Activated CD8-positive, alpha-beta T cell treated with anti-CD3 and anti-CD28 coated beads for 36 hours (primary cell): ENCODE measurements at regions of chr7 and their contacts with region 1.

Region 1: DNA sequence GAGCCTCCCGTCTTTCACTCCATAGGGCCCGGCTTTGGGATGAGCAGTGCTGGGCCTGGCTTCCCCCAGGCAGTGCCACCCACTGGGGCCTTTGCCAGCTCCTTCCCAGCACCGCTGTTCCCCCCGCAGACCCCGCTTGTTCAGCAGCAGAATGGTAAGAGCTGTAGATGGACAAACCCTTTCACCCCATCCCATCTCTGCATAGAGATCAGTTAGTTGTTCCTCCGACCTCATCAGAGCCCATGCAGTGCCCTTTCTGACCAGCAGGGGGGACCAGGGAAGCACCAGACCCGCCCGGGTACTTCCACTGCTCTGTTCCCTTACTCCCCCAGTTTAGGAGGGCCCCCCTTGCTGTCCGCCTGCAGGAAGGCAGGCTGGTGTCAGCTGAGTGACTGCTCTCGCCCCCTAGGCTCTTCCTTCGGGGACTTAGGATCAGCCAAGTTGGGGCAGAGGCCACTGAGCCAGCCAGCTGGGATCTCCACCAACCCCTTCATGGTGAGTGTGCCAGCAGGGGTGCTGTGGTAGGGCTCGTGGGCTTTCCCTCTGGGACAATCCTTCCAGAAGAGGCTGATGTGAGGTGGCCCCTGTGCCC is 9.8 kb downstream of the SAP25 start:
- DNase-seq: peak; percentile 92
- ATAC-seq: peak; percentile 76
- H3K4me3 Mint-ChIP-seq: no peak overlapping the region
- H3K27ac Mint-ChIP-seq: no peak overlapping the region
- H3K4me1 Mint-ChIP-seq: peaks cover 26% of the 10 kb centered on the region
- H3K27me3 Mint-ChIP-seq: no peaks in the 10 kb centered on the region
- CTCF ChIP-seq: peak; percentile 95

Region 2: DNA sequence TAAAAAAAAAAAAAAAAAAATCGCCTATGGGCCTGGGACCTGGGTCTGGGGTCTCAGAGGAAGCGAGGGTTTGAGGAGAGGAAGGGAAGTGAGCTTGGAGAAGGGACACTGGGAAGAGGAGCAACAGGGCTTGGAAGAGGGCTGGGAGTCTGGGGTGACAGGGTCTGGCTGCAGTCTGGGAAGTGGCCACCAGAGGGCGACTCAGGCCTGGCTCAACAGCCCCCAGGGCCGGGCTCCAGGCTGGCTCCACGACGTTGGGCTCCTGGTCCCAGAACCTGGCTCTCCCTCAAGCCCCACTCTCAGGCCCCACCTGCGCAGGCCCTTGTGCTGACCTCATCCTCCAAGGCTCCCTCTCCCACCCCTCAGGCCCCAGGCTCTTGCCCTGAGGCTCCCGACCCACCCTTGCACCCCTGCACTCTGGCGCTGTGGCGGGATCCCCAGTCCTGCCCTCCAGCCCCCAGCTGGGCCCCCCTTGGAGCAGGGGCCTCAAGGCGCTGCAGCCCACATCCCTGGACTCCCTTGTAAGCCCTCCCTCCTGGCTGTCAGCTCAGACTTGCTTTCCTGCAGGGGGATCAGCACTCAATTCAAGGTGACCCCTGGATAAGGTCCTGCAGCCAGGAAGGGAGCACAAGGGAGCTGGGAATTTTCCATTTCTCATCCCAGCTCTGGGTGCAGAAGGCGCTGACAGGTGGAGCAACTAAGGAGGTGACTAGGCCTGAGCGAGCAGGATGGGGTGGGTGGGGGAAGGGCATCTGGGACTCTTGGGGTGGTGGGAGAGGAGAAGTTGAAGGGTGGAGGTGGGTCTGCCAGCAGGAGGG is 94.5 kb before region 1 on chr7:
- CTCF ChIA-PET with region 1: interaction called, 41 read pairs
- POLR2A ChIA-PET with region 1: no interaction called
- intact Hi-C with region 1: no loop called
- DNase-seq: peak; percentile 87
- ATAC-seq: peak; percentile 89
- H3K4me3 Mint-ChIP-seq: no peak overlapping the region
- H3K27ac Mint-ChIP-seq: peak overlapping the region; percentile 57
- H3K4me1 Mint-ChIP-seq: peaks cover 33% of the 10 kb centered on the region
- H3K27me3 Mint-ChIP-seq: no peaks in the 10 kb centered on the region
- CTCF ChIP-seq: peak; percentile 82

Region 3: DNA sequence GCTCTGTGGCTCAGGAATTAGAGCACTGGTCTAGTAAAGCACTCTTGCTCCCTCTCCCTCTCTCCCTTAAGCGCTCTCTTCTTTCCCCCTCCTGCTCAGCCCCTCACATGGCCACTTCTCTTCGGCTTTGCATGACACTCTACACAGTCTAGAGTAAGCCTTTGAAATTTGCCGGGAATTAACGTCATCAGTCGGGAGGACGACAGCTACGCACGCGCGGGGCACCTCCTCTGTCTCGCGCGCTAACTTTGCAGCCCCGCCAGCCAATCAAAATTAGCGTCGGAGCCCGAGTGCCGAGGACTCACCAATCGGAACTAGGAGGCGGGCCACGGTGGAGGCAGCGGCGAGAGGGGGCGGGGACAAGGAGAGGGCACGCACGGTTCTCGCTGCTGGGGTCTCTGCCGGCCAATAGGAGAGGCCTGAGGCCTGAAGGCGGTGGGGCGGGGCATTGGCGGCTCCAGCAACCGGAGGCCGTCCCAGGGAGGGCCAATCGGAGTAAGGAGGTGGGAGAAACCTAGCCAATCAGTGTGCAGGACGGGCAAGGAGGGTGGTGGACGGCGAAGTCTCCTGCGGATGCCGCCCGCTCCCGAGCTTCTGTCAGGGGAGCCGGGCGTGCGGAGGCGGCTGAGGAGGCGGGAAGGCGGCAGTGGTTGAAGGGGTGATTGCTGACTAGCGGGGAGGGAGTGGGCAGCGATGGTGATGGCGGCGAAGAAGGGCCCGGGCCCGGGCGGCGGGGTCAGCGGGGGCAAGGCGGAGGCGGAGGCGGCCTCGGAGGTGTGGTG is 25.1 kb before region 1 on chr7 and contains the start of gene AGFG2:
- CTCF ChIA-PET with region 1: interaction called, 92 read pairs
- POLR2A ChIA-PET with region 1: interaction called, 3 read pairs
- intact Hi-C with region 1: no loop called
- DNase-seq: peak; percentile 100
- ATAC-seq: peak; percentile 97
- H3K4me3 Mint-ChIP-seq: peak within 1 kb of the TSS; percentile 91
- H3K27ac Mint-ChIP-seq: peak within 1 kb of the TSS; percentile 97
- H3K4me1 Mint-ChIP-seq: peaks cover 37% of the 10 kb centered on the region
- H3K27me3 Mint-ChIP-seq: no peaks in the 10 kb centered on the region
- CTCF ChIP-seq: no peak
- total RNA-seq, gene AGFG2: 45.6 to 45.8 TPM

Region 4: DNA sequence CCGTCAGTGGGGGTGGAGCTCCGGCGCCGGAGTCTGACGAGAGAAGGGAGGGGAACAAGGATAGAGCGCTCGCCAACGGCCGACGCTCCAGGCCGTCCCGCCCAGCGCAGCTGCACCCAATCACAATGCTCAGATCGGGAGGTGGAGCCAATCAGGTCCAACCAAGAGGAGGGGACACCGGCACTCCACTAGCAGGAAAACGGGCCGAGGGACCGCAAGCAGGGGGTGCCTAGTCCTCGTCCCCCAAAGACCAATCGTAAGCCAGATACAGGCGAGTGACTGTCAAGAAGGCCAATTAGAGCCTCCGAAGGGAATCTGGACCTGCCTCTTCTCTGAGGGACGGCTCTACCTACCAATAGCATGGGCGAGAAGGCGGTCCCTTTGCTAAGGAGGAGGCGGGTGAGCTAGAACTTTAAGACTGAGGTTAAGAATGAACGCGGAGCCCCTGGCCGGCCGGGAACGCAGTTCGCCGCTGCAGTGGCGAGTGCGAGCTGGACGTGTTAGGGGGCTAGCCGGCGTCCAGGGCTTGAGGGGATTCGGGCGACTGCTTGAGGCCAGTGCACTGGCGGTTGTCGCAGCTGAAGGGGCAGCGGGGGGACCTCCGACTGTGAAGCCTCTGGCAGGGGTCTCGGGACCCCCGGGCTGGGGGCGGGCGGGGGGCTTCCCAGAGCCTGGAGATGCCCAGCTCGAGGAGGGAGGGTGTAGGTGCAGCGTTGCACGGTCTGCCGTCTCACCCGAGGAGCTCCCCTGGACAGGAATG is 22.5 kb after region 1 on chr7 and contains the start of gene FBXO24:
- CTCF ChIA-PET with region 1: interaction called, 39 read pairs
- POLR2A ChIA-PET with region 1: interaction called, 22 read pairs
- intact Hi-C with region 1: no loop called
- DNase-seq: peak; percentile 99
- ATAC-seq: peak; percentile 84
- H3K4me3 Mint-ChIP-seq: peak within 1 kb of the TSS; percentile 98
- H3K27ac Mint-ChIP-seq: peak within 1 kb of the TSS; percentile 93
- H3K4me1 Mint-ChIP-seq: peaks cover 20% of the 10 kb centered on the region
- H3K27me3 Mint-ChIP-seq: peaks cover 5% of the 10 kb centered on the region
- CTCF ChIP-seq: no peak
- total RNA-seq, gene FBXO24: 1.4 to 1.5 TPM

Region 5: DNA sequence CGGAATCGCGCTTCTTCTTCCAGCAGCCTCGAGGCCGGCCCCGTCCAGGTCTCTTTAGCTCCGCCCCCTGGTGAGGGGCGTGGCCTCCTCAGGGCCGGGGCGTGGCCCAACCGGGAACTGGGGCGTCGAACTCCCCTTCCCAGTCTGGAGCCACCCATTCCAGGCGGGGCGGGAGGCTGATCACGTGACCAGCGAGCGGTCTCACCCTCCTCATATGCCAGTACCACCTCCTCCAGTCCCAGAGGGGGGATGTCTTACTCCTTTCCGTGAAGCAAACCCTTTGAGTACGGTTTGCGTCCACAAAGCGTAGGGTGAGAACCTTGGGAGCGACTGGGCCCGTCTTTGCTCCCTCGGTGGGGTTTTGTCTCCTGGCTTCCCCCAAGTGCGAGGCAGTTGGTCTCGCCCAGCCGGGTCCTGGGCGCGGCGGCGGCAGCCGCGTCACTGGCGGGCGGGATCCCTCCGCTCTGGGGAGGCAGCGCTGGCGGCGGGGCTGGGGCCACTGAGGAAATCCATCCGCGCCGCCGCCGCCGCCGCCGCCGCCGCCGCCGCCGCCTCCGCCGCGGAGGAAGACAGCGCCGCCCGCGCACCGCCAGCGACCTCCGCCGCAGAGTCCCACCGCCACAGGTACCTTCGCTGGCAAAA is 109.5 kb after region 1 on chr7 and contains the start of gene GNB2:
- CTCF ChIA-PET with region 1: no interaction called
- POLR2A ChIA-PET with region 1: no interaction called
- intact Hi-C with region 1: no loop called
- DNase-seq: peak; percentile 99
- ATAC-seq: peak; percentile 75
- H3K4me3 Mint-ChIP-seq: peak within 1 kb of the TSS; percentile 94
- H3K27ac Mint-ChIP-seq: peak within 1 kb of the TSS; percentile 95
- H3K4me1 Mint-ChIP-seq: peaks cover 11% of the 10 kb centered on the region
- H3K27me3 Mint-ChIP-seq: no peaks in the 10 kb centered on the region
- CTCF ChIP-seq: no peak
- total RNA-seq, gene GNB2: 192 TPM

Region 6: DNA sequence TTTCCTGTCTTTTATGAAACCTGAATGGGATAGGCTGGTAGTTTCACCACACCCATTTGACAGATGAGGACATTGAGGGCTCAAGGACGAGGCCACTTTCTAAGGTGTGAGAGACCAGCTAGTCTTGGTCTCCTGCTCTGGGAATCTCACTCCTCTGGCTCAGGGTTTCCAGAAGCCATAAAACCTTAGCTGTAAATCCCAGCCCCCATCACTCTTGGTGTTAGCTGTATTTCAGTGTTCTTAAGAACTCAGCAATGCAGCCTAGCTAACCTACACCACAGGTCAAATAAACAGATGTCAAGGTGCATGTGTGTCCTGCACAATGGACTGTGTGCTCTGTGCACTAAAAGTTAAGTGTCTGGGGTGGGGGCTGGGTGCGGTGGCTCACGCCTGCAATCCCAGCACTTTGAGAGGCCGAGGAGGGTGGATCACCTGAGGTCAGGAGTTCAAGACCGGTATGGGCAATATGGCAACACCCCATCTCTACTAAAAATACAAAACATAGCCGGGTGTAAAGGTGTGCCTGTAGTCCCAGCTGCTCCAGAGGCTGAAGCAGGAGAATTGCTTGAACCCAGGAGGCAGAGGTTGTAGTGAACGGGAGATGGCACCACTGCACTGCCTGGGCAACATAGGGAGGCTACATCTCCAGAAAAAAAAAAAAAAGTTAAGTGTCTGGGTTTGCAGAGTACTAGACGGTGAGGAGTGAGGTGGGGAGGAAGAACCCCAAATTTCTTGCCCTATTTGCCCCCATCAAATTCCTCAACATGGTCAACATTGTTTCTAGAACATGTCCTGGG is 155.8 kb after region 1 on chr7:
- CTCF ChIA-PET with region 1: interaction called, 11 read pairs
- POLR2A ChIA-PET with region 1: no interaction called
- intact Hi-C with region 1: no loop called
- DNase-seq: no peak
- ATAC-seq: no peak
- H3K4me3 Mint-ChIP-seq: no peak overlapping the region
- H3K27ac Mint-ChIP-seq: no peak overlapping the region
- H3K4me1 Mint-ChIP-seq: no peaks in the 10 kb centered on the region
- H3K27me3 Mint-ChIP-seq: peaks cover 42% of the 10 kb centered on the region
- CTCF ChIP-seq: no peak